Calu3 (cell line): ENCODE measurements at regions of chr10 and their contacts with region 1.

Region 1: GRCh38 chr10:9342885-9343570 is 1288.5 kb downstream of the GATA3 start:
- DNase-seq: peak; percentile 2
- H3K4me3 Mint-ChIP-seq: no peak overlapping the region
- H3K27ac Mint-ChIP-seq: no peak overlapping the region
- H3K4me1 Mint-ChIP-seq: no peaks in the 10 kb centered on the region
- H3K27me3 Mint-ChIP-seq: no peaks in the 10 kb centered on the region
- CTCF ChIP-seq: peak; percentile 41

Region 2: GRCh38 chr10:9311702-9312499 is 31.1 kb before region 1 on chr10:
- CTCF ChIA-PET with region 1: no interaction called
- intact Hi-C with region 1: no loop called
- DNase-seq: no peak
- H3K4me3 Mint-ChIP-seq: no peak overlapping the region
- H3K27ac Mint-ChIP-seq: no peak overlapping the region
- H3K4me1 Mint-ChIP-seq: no peaks in the 10 kb centered on the region
- H3K27me3 Mint-ChIP-seq: peaks cover 26% of the 10 kb centered on the region
- CTCF ChIP-seq: no peak

Region 3: GRCh38 chr10:9860045-9860444 is 517.0 kb after region 1 on chr10:
- CTCF ChIA-PET with region 1: interaction called, 6 read pairs
- intact Hi-C with region 1: loop called (anchors 5 kb)
- DNase-seq: no peak
- H3K4me3 Mint-ChIP-seq: no peak overlapping the region
- H3K27ac Mint-ChIP-seq: no peak overlapping the region
- H3K4me1 Mint-ChIP-seq: no peaks in the 10 kb centered on the region
- H3K27me3 Mint-ChIP-seq: no peaks in the 10 kb centered on the region
- CTCF ChIP-seq: no peak

Region 4: DNA sequence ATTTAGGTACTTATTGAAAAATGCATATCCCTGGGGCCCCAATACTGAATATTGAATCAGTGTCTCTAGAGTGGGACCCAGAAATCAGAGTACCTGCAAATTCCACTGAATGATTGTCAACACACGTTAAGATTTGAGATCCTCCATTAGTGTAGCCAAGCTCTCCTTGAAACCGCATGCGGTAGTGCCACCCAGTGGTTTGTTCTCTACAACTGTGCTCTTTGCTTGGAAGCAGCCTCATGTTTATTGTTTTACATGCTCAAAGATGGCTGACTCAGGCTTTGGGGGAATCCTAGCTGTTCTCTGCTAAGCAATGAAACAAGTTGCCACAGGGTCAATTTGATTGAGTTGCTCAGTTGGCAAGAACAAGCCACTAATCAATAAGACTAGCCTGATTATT is 1334.5 kb after region 1 on chr10:
- CTCF ChIA-PET with region 1: interaction called, 3 read pairs
- intact Hi-C with region 1: loop called (anchors 5 kb)
- DNase-seq: peak; percentile 41
- H3K4me3 Mint-ChIP-seq: no peak overlapping the region
- H3K27ac Mint-ChIP-seq: no peak overlapping the region
- H3K4me1 Mint-ChIP-seq: no peaks in the 10 kb centered on the region
- H3K27me3 Mint-ChIP-seq: no peaks in the 10 kb centered on the region
- CTCF ChIP-seq: no peak

Region 5: GRCh38 chr10:11036407-11037011 is 1693.5 kb after region 1 on chr10:
- CTCF ChIA-PET with region 1: interaction called, 3 read pairs
- intact Hi-C with region 1: loop called (anchors 1 kb)
- DNase-seq: peak; percentile 33
- H3K4me3 Mint-ChIP-seq: no peak overlapping the region
- H3K27ac Mint-ChIP-seq: no peak overlapping the region
- H3K4me1 Mint-ChIP-seq: no peaks in the 10 kb centered on the region
- H3K27me3 Mint-ChIP-seq: no peaks in the 10 kb centered on the region
- CTCF ChIP-seq: peak; percentile 65

Region 6: GRCh38 chr10:11270135-11270857 is 1927.3 kb after region 1 on chr10:
- CTCF ChIA-PET with region 1: interaction called, 16 read pairs
- intact Hi-C with region 1: loop called (anchors 1 kb)
- DNase-seq: peak; percentile 84
- H3K4me3 Mint-ChIP-seq: no peak overlapping the region
- H3K27ac Mint-ChIP-seq: no peak overlapping the region
- H3K4me1 Mint-ChIP-seq: no peaks in the 10 kb centered on the region
- H3K27me3 Mint-ChIP-seq: peaks cover 64% of the 10 kb centered on the region
- CTCF ChIP-seq: peak; percentile 90